ENCODE measurements at regions of chr1 and their contacts with region 1.

Region 1: GRCh38 chr1:62436466-62437256 is at the start of gene USP1:
- DNase-seq: peak; percentile 98
- H3K4me3 Mint-ChIP-seq: peak within 1 kb of the TSS; percentile 94
- H3K27ac Mint-ChIP-seq: peak within 1 kb of the TSS; percentile 99
- H3K4me1 Mint-ChIP-seq: peaks cover 41% of the 10 kb centered on the region
- H3K27me3 Mint-ChIP-seq: peaks cover 8% of the 10 kb centered on the region
- total RNA-seq, gene USP1: 77.8 and 78.7 TPM in 2 replicates

Region 2: DNA sequence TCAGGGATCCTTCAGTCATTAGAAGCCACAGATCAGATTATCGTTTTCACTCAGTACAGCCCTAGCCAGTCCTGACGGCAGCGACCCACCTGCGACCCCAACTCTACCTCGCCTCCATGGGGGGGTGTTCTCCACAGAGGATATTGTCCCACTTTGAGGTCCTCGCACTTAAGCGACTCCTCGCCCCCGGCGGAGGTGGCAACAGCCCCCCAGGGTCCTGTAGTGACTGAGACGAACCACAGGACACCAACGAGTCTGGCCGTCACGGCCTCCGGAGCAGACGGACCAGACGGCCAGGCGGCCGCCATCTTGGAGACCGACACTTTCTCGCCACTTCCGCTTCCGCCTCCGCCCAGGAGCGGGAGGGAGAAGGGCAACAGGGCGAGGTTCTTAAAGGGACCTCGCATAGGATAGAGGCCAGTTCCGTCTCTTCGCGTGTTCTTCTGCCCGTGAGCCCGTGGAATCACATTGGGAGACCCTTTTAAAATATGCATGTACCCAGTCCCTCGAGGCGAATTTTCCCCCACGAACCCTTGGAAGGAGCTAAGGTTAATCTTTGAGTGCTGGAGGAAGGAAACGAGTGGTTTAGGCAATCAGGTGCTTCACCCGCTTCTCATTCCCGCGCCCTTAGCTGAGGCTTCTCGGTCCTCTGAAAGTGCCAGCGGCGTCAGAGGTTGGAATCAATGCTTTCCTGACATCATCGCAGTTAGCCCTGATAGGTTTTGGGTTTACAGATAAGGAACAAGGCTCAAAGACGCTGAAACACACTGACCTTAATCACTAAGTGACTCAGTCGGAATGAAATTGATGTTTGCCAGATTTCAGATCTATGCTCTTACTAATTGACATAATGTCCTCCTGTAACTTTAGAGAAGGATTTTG is 711.6 kb before region 1 on chr1 and contains the start of gene TM2D1:
- intact Hi-C with region 1: loop called (anchors 5 kb)
- DNase-seq: peak; percentile 86
- H3K4me3 Mint-ChIP-seq: peak within 1 kb of the TSS; percentile 99
- H3K27ac Mint-ChIP-seq: peak within 1 kb of the TSS; percentile 99
- H3K4me1 Mint-ChIP-seq: peaks cover 18% of the 10 kb centered on the region
- H3K27me3 Mint-ChIP-seq: peaks cover 2% of the 10 kb centered on the region
- total RNA-seq, gene TM2D1: 28.3 and 29.6 TPM in 2 replicates

Region 3: GRCh38 chr1:62271948-62272728 is 164.5 kb before region 1 on chr1:
- intact Hi-C with region 1: loop called (anchors 1 kb)
- DNase-seq: peak; percentile 46
- H3K4me3 Mint-ChIP-seq: peak overlapping the region; percentile 25
- H3K27ac Mint-ChIP-seq: peak overlapping the region; percentile 81
- H3K4me1 Mint-ChIP-seq: peaks cover 18% of the 10 kb centered on the region
- H3K27me3 Mint-ChIP-seq: no peaks in the 10 kb centered on the region

Region 4: DNA sequence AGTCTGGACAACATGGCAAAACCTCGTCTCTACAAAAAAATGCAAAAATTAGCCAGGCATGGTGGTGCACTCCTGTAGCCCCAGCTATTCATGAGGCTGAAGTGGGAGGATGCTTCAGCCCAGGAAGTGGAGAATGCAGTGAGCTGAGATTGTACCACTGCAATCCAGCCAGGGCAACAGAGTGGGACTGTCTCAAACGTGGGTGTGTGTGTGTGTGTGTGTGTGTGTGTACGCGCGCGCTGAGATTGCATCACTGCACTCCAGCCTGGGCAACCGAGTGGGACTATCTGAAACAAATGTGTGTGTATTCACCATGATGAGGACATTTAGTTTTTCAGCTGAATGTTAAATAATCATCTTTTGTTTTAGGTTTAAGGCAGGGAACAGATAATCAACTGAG is 21.3 kb after region 1 on chr1:
- intact Hi-C with region 1: loop called (anchors 2 kb)
- DNase-seq: no peak
- H3K4me3 Mint-ChIP-seq: no peak overlapping the region
- H3K27ac Mint-ChIP-seq: no peak overlapping the region
- H3K4me1 Mint-ChIP-seq: peaks cover 6% of the 10 kb centered on the region
- H3K27me3 Mint-ChIP-seq: no peaks in the 10 kb centered on the region

Region 5: GRCh38 chr1:62508187-62508758 is 71.6 kb after region 1 on chr1:
- intact Hi-C with region 1: no loop called
- DNase-seq: no peak
- H3K4me3 Mint-ChIP-seq: no peak overlapping the region
- H3K27ac Mint-ChIP-seq: no peak overlapping the region
- H3K4me1 Mint-ChIP-seq: no peaks in the 10 kb centered on the region
- H3K27me3 Mint-ChIP-seq: no peaks in the 10 kb centered on the region

Region 6: DNA sequence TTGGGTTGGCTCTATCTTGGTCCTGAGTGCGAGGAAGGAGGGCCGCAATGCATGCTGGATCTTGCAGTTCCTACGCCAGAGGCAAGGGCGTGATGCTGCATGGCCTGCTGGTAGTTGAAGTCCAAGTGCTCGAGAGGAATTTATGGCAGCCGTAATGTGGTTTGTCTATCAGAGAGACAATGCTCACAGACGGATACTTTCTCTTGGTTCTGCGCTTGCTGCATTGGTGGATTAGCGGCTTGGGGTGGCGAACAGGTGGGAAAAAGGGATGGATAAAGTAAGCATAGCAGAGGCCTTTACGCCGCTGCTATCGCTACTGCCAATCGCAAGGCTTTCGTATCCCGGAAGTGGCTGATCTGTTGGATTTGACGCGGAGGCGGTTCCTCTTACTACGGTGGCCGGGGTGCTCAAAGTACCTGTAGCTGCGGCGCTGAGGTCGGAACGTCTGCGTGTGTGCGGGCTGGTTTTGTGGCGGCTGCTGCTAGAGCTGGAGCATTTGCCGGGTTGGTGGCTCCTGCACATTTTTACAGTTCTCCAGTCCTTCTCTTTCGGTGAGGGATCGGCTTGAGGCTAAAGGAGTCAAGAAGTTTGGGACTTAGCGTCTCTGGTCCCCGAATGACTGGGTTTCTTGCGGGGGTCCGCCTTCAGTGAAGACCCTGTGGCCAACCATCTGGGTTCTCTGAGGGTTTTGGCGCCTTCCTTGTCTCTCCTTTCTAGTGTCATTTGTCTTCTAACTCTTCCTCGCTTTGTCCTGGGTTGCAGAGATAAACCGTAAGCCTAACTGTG is 347.3 kb after region 1 on chr1 and contains the start of gene ATG4C:
- intact Hi-C with region 1: loop called (anchors 1 kb)
- DNase-seq: peak; percentile 90
- H3K4me3 Mint-ChIP-seq: no peak within 1 kb of the TSS
- H3K27ac Mint-ChIP-seq: no peak within 1 kb of the TSS
- H3K4me1 Mint-ChIP-seq: peaks cover 8% of the 10 kb centered on the region
- H3K27me3 Mint-ChIP-seq: peaks cover 4% of the 10 kb centered on the region
- total RNA-seq, gene ATG4C: 8.8 TPM in 2 replicates

Region 7: GRCh38 chr1:63522891-63523728 is 1086.4 kb after region 1 on chr1 and contains the starts of genes EFCAB7 and ITGB3BP:
- intact Hi-C with region 1: loop called (anchors 1 kb)
- DNase-seq: peak; percentile 80
- H3K4me3 Mint-ChIP-seq: peak within 1 kb of the TSS; percentile 99
- H3K27ac Mint-ChIP-seq: peak within 1 kb of the TSS; percentile 94
- H3K4me1 Mint-ChIP-seq: peaks cover 53% of the 10 kb centered on the region
- H3K27me3 Mint-ChIP-seq: no peaks in the 10 kb centered on the region
- total RNA-seq, gene EFCAB7: 6.4 and 6.7 TPM in 2 replicates
- total RNA-seq, gene ITGB3BP: 44.1 and 49.8 TPM in 2 replicates